Mammary epithelial cell (primary cell): ENCODE measurements at regions of chr2 and their contacts with region 1.

Region 1: DNA sequence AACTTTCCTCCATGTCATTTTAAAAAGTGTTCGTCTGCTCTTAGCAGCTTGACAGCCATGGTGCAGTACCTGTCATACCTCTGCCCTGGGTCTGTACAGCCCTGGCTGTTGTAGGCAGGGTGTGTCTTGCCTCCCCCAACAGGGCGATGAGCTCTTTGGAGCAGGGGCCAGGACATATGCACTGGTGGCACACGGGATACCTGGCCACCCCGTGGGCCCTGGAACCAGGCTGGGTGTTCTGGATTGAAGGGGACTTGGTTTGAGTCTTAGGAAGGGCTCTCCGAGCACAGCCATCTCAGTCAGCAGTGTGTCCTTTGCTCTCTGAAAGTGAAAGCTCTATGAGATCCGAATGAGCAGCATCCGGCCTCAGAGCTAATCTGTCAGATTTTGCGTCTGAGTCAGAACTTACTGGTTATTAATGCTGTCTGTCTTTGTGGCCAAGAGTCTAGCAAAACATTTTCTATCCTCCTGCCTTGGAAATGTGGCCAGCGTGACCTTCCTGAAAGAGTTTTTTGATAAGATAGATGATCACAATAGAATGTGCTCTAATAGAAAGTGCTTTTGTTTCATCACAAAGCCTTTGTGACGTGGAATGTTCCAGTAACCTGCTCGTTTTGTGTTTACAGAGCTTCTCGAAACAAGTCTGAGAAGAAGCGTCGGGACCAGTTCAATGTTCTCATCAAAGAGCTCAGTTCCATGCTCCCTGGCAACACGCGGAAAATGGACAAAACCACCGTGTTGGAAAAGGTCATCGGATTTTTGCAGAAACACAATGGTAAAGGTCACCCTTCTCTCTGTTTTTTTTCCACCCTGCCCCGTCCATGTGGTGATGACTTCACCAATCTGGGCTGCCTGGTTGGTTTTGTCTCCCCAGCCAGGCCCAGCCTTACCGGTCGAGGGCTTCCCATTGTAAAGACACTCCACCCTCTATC is 77.3 kb upstream of the RPL31 start:
- DNase-seq: no peak
- H3K4me3 ChIP-seq: no peak overlapping the region
- H3K27ac ChIP-seq: no peak overlapping the region
- H3K4me1 ChIP-seq: no peaks in the 10 kb centered on the region
- H3K27me3 ChIP-seq: no peaks in the 10 kb centered on the region
- CTCF ChIP-seq: no peak

Region 2: DNA sequence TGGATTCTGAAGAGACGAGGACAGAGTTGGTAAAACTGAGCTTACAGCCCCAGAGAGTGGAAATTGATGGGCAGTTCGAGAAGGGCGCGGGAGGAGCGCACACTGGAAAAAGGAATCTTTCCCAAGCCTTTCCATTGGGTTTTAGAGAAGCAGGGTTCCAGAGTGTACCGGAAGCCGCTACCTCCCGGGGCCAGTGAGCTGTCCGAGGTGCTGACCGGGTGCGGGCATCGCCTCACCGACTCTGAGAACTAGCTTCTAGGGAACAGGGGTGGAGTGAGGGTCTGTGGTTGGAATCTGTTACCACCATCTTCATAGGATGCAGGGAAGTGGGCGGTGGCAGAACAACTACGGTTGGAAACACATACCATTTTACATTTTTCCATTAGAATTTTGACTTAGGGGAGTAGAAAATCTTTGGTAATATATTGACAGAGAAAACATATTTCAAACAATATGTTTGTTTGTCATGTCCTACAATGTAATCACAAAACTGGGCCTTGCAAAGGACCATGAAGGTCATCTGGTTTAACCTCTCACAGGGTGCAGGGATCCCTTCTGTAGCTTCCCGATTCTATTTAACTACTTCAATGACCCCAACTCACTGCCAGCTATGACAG is 453.8 kb before region 1 on chr2:
- CTCF ChIA-PET with region 1: no interaction called
- dilution Hi-C with region 1: no loop called
- in situ Hi-C with region 1: no loop called
- intact Hi-C with region 1: no loop called
- DNase-seq: peak; percentile 11
- H3K4me3 ChIP-seq: no peak overlapping the region
- H3K27ac ChIP-seq: no peak overlapping the region
- H3K4me1 ChIP-seq: no peaks in the 10 kb centered on the region
- H3K27me3 ChIP-seq: no peaks in the 10 kb centered on the region
- CTCF ChIP-seq: no peak

Region 3: DNA sequence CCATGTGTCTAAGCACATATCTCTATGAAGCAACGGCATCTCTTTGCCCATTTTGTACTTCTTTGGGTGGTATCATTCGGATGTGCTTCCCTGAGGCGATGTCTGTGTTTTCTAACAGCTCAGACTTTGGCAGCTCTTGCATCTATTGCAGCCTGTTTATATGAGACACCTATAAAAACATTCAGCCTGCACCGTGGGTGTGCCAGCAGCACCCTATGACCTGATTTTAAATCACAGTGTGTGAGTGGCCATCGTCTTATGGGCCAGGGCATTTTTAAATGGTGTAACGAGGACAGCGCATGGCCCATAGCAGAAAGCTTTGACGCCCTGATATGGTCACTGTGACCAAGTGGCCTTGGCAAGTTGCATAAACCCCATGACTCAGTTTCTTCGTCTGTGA is 91.9 kb before region 1 on chr2:
- CTCF ChIA-PET with region 1: no interaction called
- dilution Hi-C with region 1: loop called (anchors 5 kb)
- in situ Hi-C with region 1: no loop called
- intact Hi-C with region 1: no loop called
- DNase-seq: no peak
- H3K4me3 ChIP-seq: no peak overlapping the region
- H3K27ac ChIP-seq: no peak overlapping the region
- H3K4me1 ChIP-seq: peaks cover 11% of the 10 kb centered on the region
- H3K27me3 ChIP-seq: no peaks in the 10 kb centered on the region
- CTCF ChIP-seq: no peak

Region 4: GRCh38 chr2:100976645-100977391 is 52.0 kb after region 1 on chr2:
- CTCF ChIA-PET with region 1: no interaction called
- dilution Hi-C with region 1: loop called (anchors 5 kb)
- in situ Hi-C with region 1: no loop called
- intact Hi-C with region 1: no loop called
- DNase-seq: no peak
- H3K4me3 ChIP-seq: no peak overlapping the region
- H3K27ac ChIP-seq: no peak overlapping the region
- H3K4me1 ChIP-seq: no peaks in the 10 kb centered on the region
- H3K27me3 ChIP-seq: no peaks in the 10 kb centered on the region
- CTCF ChIP-seq: no peak

Region 5: DNA sequence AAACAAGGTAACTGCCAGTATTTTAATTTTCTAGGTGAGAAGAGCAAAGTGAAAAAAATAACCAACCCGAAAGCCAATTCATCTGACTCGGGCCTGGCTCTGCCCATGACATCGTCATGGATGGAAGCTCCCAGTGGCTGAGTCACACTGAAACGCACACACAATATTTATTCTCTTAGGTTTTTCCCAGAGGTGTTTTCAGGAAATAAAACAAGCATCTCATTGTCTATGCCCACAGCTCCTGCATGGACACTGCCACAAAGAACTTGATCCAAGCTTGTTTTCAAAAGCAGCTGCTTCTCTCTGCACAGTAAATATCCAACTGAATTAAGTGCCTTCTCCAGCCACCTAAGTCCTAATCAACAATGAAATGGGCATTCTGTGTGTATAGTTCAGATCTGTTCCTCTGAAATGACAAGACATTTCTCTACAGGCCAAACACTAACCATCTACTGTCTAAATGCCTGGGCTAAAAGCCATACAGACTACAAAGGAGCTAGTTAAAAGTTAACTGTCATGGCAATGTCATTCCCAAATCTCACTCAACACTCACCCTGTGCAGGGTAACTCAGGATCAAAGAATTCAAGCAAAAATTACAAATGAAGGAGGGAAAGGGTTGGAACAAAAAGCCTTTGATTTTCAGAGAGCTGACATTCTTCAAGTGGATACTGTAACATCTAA is 140.2 kb after region 1 on chr2:
- CTCF ChIA-PET with region 1: no interaction called
- dilution Hi-C with region 1: no loop called
- in situ Hi-C with region 1: no loop called
- intact Hi-C with region 1: no loop called
- DNase-seq: peak; percentile 96
- H3K4me3 ChIP-seq: no peak overlapping the region
- H3K27ac ChIP-seq: peak overlapping the region; percentile 99
- H3K4me1 ChIP-seq: peaks cover 32% of the 10 kb centered on the region
- H3K27me3 ChIP-seq: no peaks in the 10 kb centered on the region
- CTCF ChIP-seq: no peak